Heart left ventricle (tissue), 16 donors: ENCODE measurements at regions of chr12 and their contacts with region 1.

Region 1: GRCh38 chr12:91965781-91966180 is 179.9 kb downstream of the BTG1 start:
- DNase-seq: no peak
- ATAC-seq: no peak
- H3K4me3 ChIP-seq: no peak overlapping the region
- H3K27ac ChIP-seq: no peak overlapping the region
- H3K4me1 ChIP-seq: peaks cover 0 to 16% (median 0%) of the 10 kb centered on the region in 12 donors
- H3K27me3 ChIP-seq: no peaks in the 10 kb centered on the region
- CTCF ChIP-seq: no peak
- POLR2A ChIP-seq: no peak

Region 2: GRCh38 chr12:91825999-91826398 is 139.8 kb before region 1 on chr12:
- intact Hi-C with region 1: loop called in 1 of 10 experiments (anchors 10 kb)
- DNase-seq: no peak
- ATAC-seq: no peak
- H3K4me3 ChIP-seq: no peak overlapping the region
- H3K27ac ChIP-seq: no peak overlapping the region
- H3K4me1 ChIP-seq: no peaks in the 10 kb centered on the region
- H3K27me3 ChIP-seq: no peaks in the 10 kb centered on the region
- CTCF ChIP-seq: no peak
- POLR2A ChIP-seq: no peak